Calu3 (cell line): ENCODE measurements at regions of chr17 and their contacts with region 1.

Region 1: GRCh38 chr17:27236717-27237315 is 57.1 kb upstream of the WSB1 start:
- DNase-seq: peak; percentile 74
- H3K4me3 Mint-ChIP-seq: no peak overlapping the region
- H3K27ac Mint-ChIP-seq: no peak overlapping the region
- H3K4me1 Mint-ChIP-seq: peaks cover 22% of the 10 kb centered on the region
- H3K27me3 Mint-ChIP-seq: no peaks in the 10 kb centered on the region
- CTCF ChIP-seq: peak; percentile 66

Region 2: GRCh38 chr17:27199948-27200347 is 36.9 kb before region 1 on chr17:
- CTCF ChIA-PET with region 1: no interaction called
- intact Hi-C with region 1: loop called (anchors 5 kb)
- DNase-seq: no peak
- H3K4me3 Mint-ChIP-seq: no peak overlapping the region
- H3K27ac Mint-ChIP-seq: no peak overlapping the region
- H3K4me1 Mint-ChIP-seq: no peaks in the 10 kb centered on the region
- H3K27me3 Mint-ChIP-seq: no peaks in the 10 kb centered on the region
- CTCF ChIP-seq: no peak

Region 3: GRCh38 chr17:27226615-27227230 is 10.1 kb before region 1 on chr17:
- CTCF ChIA-PET with region 1: interaction called, 18 read pairs
- intact Hi-C with region 1: no loop called
- DNase-seq: peak; percentile 45
- H3K4me3 Mint-ChIP-seq: no peak overlapping the region
- H3K27ac Mint-ChIP-seq: no peak overlapping the region
- H3K4me1 Mint-ChIP-seq: no peaks in the 10 kb centered on the region
- H3K27me3 Mint-ChIP-seq: no peaks in the 10 kb centered on the region
- CTCF ChIP-seq: no peak

Region 4: DNA sequence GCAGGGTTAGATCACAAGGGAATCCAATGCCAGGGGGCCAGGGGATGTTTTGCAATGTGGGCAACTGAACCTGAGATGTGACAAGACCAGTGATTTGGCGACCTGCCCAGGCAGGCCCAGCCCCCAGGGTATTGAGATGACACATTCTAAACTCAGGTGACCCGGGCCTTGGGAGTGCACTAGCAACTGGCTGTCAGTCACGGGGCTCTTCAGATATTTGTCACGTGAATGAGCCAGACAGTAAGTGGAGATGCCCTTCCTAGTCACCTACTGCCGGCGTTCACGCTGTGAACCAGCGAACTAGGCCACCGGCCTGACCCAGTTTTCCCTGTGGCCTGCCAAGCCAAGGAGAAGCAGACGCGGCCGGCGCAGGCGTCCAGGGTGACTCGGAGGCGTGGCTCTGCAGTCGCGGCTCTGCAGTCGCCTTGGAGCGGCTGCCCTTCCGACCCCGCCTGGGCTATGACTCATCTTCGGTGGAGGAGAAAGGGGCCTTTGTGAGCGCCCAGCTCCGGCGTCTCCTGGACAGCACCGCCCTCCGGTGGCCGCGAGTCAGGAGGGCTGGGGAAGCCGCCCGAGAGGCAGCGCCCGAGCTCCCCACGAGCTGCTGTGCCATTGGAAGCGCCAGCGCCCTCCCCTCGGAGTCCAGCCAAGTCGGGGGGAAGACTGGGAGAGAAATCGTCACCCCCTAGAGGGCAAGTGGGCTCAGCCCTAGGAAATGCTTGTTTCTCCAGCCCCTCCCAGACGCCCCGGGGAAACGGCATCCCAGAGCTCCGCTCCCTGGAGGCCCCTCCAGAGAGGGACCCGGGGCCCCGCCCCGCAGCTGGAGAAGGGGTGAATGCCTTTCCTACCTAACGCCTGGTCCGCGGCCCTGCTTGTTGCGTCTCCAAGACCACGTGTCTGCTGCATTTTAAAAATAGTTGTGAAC is 95.9 kb after region 1 on chr17:
- CTCF ChIA-PET with region 1: interaction called, 45 read pairs
- intact Hi-C with region 1: loop called (anchors 1 kb)
- DNase-seq: peak; percentile 99
- H3K4me3 Mint-ChIP-seq: peak overlapping the region; percentile 59
- H3K27ac Mint-ChIP-seq: peak overlapping the region; percentile 86
- H3K4me1 Mint-ChIP-seq: peaks cover 34% of the 10 kb centered on the region
- H3K27me3 Mint-ChIP-seq: no peaks in the 10 kb centered on the region
- CTCF ChIP-seq: peak; percentile 87